ENCODE measurements at regions of chr1 and their contacts with region 1.

Region 1: DNA sequence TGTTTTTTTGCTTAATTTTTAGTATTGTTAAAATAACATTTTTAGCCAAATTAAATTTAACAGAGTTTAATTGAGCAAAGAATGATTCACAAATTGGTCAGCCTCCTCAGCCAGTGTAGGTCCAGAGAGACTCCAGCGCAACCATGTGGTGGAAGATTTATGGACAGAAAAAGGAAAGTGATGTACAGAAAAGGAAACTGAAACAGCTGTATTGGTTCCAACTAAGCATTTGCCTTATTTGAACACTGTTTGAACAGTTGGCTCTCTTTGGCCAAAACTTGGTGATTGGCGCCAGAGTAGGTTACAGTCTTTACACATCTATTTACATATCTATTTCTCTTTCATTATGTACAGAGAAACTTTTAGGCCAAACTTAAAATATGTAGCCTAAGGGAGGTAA is 19.4 kb downstream of the RPS6KC1 start:
- DNase-seq: peak; percentile 17
- H3K4me3 Mint-ChIP-seq: no peak overlapping the region
- H3K27ac Mint-ChIP-seq: peak overlapping the region; percentile 12
- H3K4me1 Mint-ChIP-seq: peaks cover 32% of the 10 kb centered on the region
- H3K27me3 Mint-ChIP-seq: no peaks in the 10 kb centered on the region

Region 2: DNA sequence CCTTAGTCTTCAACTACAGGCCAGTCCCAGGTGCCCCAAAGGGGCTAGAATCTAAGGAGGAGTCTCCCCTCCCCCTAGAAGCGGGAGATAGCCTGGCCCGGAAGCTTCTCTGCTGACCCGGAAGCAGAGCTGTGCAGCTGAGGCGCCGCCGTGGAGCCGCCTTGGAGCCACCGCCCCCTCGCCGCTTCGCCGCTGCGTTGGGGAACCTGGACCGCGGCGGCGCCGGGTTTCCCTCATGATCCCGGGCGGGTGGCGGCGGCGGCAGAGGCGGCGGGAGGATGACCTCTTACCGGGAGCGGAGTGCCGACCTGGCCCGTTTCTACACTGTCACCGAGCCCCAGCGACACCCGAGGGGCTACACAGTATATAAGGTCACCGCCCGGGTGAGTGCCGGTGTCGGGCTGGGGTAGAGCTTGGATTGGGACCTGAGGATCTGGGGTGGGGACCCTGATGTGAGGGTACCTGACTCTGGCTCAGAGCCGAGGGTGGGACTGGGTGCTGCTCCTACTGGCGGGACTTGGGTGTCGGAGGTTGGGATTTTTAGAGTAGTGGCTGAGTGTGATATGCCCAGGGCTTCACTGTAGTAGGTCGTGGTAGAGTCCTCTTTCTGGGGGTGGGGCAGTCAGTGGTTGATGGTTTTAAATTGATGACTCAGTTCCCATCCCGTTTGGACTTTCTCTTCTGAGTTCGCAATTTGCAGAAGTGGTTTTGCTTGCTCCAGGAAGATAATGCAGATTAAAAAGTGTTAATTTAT is 19.1 kb before region 1 on chr1 and contains the start of gene RPS6KC1:
- intact Hi-C with region 1: loop called (anchors 1 kb)
- DNase-seq: peak; percentile 74
- H3K4me3 Mint-ChIP-seq: peak within 1 kb of the TSS; percentile 96
- H3K27ac Mint-ChIP-seq: peak within 1 kb of the TSS; percentile 90
- H3K4me1 Mint-ChIP-seq: peaks cover 37% of the 10 kb centered on the region
- H3K27me3 Mint-ChIP-seq: peaks cover 9% of the 10 kb centered on the region
- total RNA-seq, gene RPS6KC1: 7.2 and 7.5 TPM in 2 replicates

Region 3: GRCh38 chr1:213332491-213332890 is 262.1 kb after region 1 on chr1:
- intact Hi-C with region 1: no loop called
- DNase-seq: no peak
- H3K4me3 Mint-ChIP-seq: no peak overlapping the region
- H3K27ac Mint-ChIP-seq: no peak overlapping the region
- H3K4me1 Mint-ChIP-seq: no peaks in the 10 kb centered on the region
- H3K27me3 Mint-ChIP-seq: no peaks in the 10 kb centered on the region

Region 4: GRCh38 chr1:213572912-213573647 is 502.7 kb after region 1 on chr1:
- intact Hi-C with region 1: no loop called
- DNase-seq: no peak
- H3K4me3 Mint-ChIP-seq: no peak overlapping the region
- H3K27ac Mint-ChIP-seq: no peak overlapping the region
- H3K4me1 Mint-ChIP-seq: no peaks in the 10 kb centered on the region
- H3K27me3 Mint-ChIP-seq: no peaks in the 10 kb centered on the region

Measured in activated T-helper 1 cell treated with anti-CD3 and anti-CD28 coated beads, Interleukin-12 subunit alpha, Interleukin-12 subunit beta, Interleukin-2, Interleukin-4 antibody, amounts not matched to agents 30 ng/mL and 10 ng/mL and 1 ng/mL, durations not matched to agents 14 hours and 24 hours and 36 hours (primary cell).